ENCODE measurements at regions of chr1 and their contacts with region 1.

Region 1: GRCh38 chr1:36149237-36149972 is at the start of gene TRAPPC3:
- DNase-seq: peak; percentile 96 to 100 (median 99)
- ATAC-seq: peak; percentile 96
- H3K4me3 ChIP-seq: peak within 1 kb of the TSS; percentile 95
- H3K4me3 Mint-ChIP-seq: peak within 1 kb of the TSS; percentile 90 to 100 (median 98)
- H3K27ac ChIP-seq: peak within 1 kb of the TSS; percentile 91
- H3K27ac Mint-ChIP-seq: peak within 1 kb of the TSS; percentile 97 to 100 (median 98)
- H3K4me1 ChIP-seq: peaks cover 35 to 52% of the 10 kb centered on the region in 2 donors
- H3K4me1 Mint-ChIP-seq: peaks cover 48 to 84% (median 66%) of the 10 kb centered on the region in 7 donors
- H3K27me3 ChIP-seq: no peaks in the 10 kb centered on the region
- H3K27me3 Mint-ChIP-seq: no peaks in the 10 kb centered on the region
- total RNA-seq, gene TRAPPC3: 32.1 to 60.5 (median 47.2) TPM

Region 2: GRCh38 chr1:35930593-35931445 is 218.6 kb before region 1 on chr1 and contains the start of gene AGO3:
- CTCF ChIA-PET with region 1: no interaction called
- POLR2A ChIA-PET with region 1: interaction called, 3 read pairs
- intact Hi-C with region 1: loop called (anchors 1 to 5 kb)
- DNase-seq: peak; percentile 79 to 90 (median 86)
- ATAC-seq: peak; percentile 91
- H3K4me3 ChIP-seq: peak within 1 kb of the TSS; percentile 93
- H3K4me3 Mint-ChIP-seq: peak within 1 kb of the TSS; percentile 84 to 97 (median 92)
- H3K27ac ChIP-seq: peak within 1 kb of the TSS; percentile 95
- H3K27ac Mint-ChIP-seq: peak within 1 kb of the TSS; percentile 94 to 98 (median 96)
- H3K4me1 ChIP-seq: peaks cover 21 to 22% of the 10 kb centered on the region in 2 donors
- H3K4me1 Mint-ChIP-seq: peaks cover 14 to 46% (median 44%) of the 10 kb centered on the region in 7 donors
- H3K27me3 ChIP-seq: no peaks in the 10 kb centered on the region
- H3K27me3 Mint-ChIP-seq: no peaks in the 10 kb centered on the region
- total RNA-seq, gene AGO3: 27.2 to 49.2 (median 39.4) TPM

Region 3: DNA sequence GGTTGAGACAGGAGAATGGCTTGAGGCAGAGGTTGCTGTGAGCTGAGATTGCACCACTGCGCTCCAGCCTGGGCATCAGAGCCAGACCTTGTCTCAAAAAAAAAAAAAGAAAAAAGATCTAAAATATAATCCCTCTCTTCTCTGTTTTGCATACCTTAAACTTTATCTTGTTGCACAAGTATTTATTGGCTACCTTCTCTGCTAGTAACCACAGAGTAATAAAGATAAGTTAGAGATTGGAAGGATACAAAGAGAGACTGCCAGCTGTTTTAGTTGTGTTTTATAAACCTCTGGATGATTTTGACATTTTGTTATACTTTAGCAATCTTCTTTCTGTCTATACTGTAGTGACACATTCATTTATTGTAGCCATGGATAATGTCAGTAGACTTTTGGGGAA is 190.8 kb before region 1 on chr1:
- CTCF ChIA-PET with region 1: no interaction called
- POLR2A ChIA-PET with region 1: no interaction called
- intact Hi-C with region 1: no loop called
- DNase-seq: no peak
- ATAC-seq: no peak
- H3K4me3 ChIP-seq: no peak overlapping the region
- H3K4me3 Mint-ChIP-seq: no peak overlapping the region
- H3K27ac ChIP-seq: no peak overlapping the region
- H3K27ac Mint-ChIP-seq: no peak overlapping the region
- H3K4me1 ChIP-seq: no peaks in the 10 kb centered on the region
- H3K4me1 Mint-ChIP-seq: peaks cover 0 to 20% (median 10%) of the 10 kb centered on the region in 7 donors
- H3K27me3 ChIP-seq: no peaks in the 10 kb centered on the region
- H3K27me3 Mint-ChIP-seq: no peaks in the 10 kb centered on the region

Region 4: DNA sequence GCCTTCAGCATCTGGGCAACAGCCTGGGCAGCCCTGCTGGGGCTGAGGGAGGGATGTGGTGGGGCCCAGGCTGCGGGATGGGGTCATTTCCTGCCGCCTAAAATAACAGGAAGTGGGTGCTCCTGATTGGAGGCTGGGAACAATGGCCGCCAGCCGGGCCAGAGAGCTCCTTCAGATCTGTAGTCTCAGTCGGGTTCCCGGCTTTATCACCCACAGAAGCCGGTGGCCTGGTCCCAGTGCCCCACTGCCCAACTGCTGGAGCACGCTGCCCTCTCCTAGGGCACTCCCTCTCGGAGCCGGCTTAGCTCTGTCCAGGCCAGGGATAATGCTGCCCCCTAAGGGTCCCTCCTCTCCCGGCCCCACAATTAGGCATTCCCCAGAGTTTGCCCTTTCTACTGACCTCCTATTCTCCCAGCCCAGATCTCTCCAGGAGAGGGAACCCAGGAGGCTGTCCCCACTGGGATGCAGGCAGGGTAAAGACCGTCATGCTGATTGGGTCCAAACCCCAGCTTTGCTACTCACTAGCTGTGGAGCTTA is 11.6 kb after region 1 on chr1:
- CTCF ChIA-PET with region 1: interaction called, 72 read pairs
- POLR2A ChIA-PET with region 1: interaction called, 272 read pairs
- intact Hi-C with region 1: loop called (anchors 1 kb)
- DNase-seq: peak; percentile 27 to 72 (median 66)
- ATAC-seq: peak; percentile 44
- H3K4me3 ChIP-seq: peak overlapping the region; percentile 59
- H3K4me3 Mint-ChIP-seq: peak overlapping the region; percentile 79 to 92 (median 87)
- H3K27ac ChIP-seq: peak overlapping the region; percentile 94
- H3K27ac Mint-ChIP-seq: peak overlapping the region; percentile 92 to 99 (median 97)
- H3K4me1 ChIP-seq: peaks cover 56 to 66% of the 10 kb centered on the region in 2 donors
- H3K4me1 Mint-ChIP-seq: peaks cover 52 to 79% (median 70%) of the 10 kb centered on the region in 7 donors
- H3K27me3 ChIP-seq: no peaks in the 10 kb centered on the region
- H3K27me3 Mint-ChIP-seq: no peaks in the 10 kb centered on the region

Region 5: GRCh38 chr1:36306902-36307456 is 157.6 kb after region 1 on chr1:
- CTCF ChIA-PET with region 1: no interaction called
- POLR2A ChIA-PET with region 1: interaction called, 4 read pairs
- intact Hi-C with region 1: loop called (anchors 1 kb)
- DNase-seq: peak; percentile 90 to 96 (median 93)
- ATAC-seq: peak; percentile 99
- H3K4me3 ChIP-seq: peak overlapping the region; percentile 87
- H3K4me3 Mint-ChIP-seq: peak overlapping the region; percentile 87 to 98 (median 96)
- H3K27ac ChIP-seq: peak overlapping the region; percentile 81
- H3K27ac Mint-ChIP-seq: peak overlapping the region; percentile 70 to 97 (median 87)
- H3K4me1 ChIP-seq: peaks cover 0 to 6% of the 10 kb centered on the region in 2 donors
- H3K4me1 Mint-ChIP-seq: peaks cover 6 to 39% (median 13%) of the 10 kb centered on the region in 7 donors
- H3K27me3 ChIP-seq: no peaks in the 10 kb centered on the region
- H3K27me3 Mint-ChIP-seq: no peaks in the 10 kb centered on the region

Region 6: DNA sequence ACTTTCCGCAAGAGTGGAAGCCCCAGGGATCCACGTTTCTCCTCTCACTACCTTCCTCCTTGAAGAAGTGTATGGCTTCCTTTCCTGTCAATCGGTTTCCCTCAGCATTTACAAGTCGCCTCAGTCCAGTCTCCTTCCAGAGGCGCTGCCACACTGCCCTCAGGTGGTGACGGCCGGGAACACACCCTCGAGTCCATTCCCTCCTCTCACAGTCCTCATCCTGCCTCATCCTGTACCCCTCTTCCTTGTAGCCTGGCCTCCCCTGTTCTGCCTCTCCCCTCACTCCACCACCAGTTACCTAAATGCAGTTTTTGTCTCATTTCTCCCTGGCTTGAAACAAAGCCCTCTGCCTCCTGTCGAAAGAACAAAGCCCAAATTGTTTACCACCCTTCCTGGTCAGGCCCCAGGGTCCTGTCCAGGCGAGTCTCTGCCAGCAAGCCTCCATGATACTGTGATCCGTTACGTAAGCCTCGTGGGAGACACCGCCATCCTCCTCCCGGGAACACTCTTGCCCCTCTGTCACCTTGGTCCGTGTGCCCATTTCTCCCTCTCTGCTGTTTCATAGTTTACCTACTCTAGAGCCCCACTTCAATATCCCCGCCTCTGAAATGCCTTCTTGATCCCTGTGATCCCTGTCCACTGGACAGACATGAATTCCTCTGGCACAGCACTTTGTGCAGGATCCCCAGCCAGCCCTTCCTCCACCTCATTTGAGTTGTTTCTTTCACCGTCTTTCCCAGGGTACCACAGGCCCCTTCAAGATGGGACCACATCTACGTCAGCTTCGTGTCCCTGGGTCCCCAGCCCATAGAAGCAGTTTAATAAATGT is 271.6 kb after region 1 on chr1:
- CTCF ChIA-PET with region 1: interaction called, 4 read pairs
- POLR2A ChIA-PET with region 1: no interaction called
- intact Hi-C with region 1: loop called (anchors 1 kb)
- DNase-seq: peak; percentile 80 to 92 (median 89)
- ATAC-seq: peak; percentile 100
- H3K4me3 ChIP-seq: peak overlapping the region; percentile 17
- H3K4me3 Mint-ChIP-seq: peak overlapping the region; percentile 64 to 85 (median 77)
- H3K27ac ChIP-seq: peak overlapping the region; percentile 65
- H3K27ac Mint-ChIP-seq: peak overlapping the region; percentile 74 to 98 (median 93)
- H3K4me1 ChIP-seq: peaks cover 10 to 19% of the 10 kb centered on the region in 2 donors
- H3K4me1 Mint-ChIP-seq: peaks cover 11 to 37% (median 33%) of the 10 kb centered on the region in 7 donors
- H3K27me3 ChIP-seq: no peaks in the 10 kb centered on the region
- H3K27me3 Mint-ChIP-seq: no peaks in the 10 kb centered on the region

Region 7: GRCh38 chr1:37474046-37474759 is 1324.8 kb after region 1 on chr1 and contains the start of gene ZC3H12A:
- CTCF ChIA-PET with region 1: no interaction called
- POLR2A ChIA-PET with region 1: interaction called, 3 read pairs
- intact Hi-C with region 1: loop called in 1 of 2 experiments (anchors 10 kb)
- DNase-seq: peak; percentile 87 to 98 (median 93)
- ATAC-seq: peak; percentile 82
- H3K4me3 ChIP-seq: peak within 1 kb of the TSS; percentile 97
- H3K4me3 Mint-ChIP-seq: peak within 1 kb of the TSS; percentile 91 to 99 (median 96)
- H3K27ac ChIP-seq: peak within 1 kb of the TSS; percentile 95
- H3K27ac Mint-ChIP-seq: peak within 1 kb of the TSS; percentile 93 to 99 (median 98)
- H3K4me1 ChIP-seq: peaks cover 28 to 33% of the 10 kb centered on the region in 2 donors
- H3K4me1 Mint-ChIP-seq: peaks cover 43 to 59% (median 54%) of the 10 kb centered on the region in 7 donors
- H3K27me3 ChIP-seq: no peaks in the 10 kb centered on the region
- H3K27me3 Mint-ChIP-seq: no peaks in the 10 kb centered on the region
- total RNA-seq, gene ZC3H12A: 35.0 to 122 (median 46.7) TPM